ENCODE measurements at regions of chr1 and their contacts with region 1.

Region 1: GRCh38 chr1:154272217-154272998 is at the start of gene HAX1:
- DNase-seq: peak; percentile 96
- H3K4me3 Mint-ChIP-seq: peak within 1 kb of the TSS; percentile 96
- H3K27ac Mint-ChIP-seq: peak within 1 kb of the TSS; percentile 94
- H3K4me1 Mint-ChIP-seq: peaks cover 28% of the 10 kb centered on the region
- H3K27me3 Mint-ChIP-seq: no peaks in the 10 kb centered on the region
- total RNA-seq, gene HAX1: 112 and 113 TPM in 2 replicates

Region 2: GRCh38 chr1:154145986-154146385 is 126.4 kb before region 1 on chr1:
- intact Hi-C with region 1: no loop called
- DNase-seq: no peak
- H3K4me3 Mint-ChIP-seq: no peak overlapping the region
- H3K27ac Mint-ChIP-seq: no peak overlapping the region
- H3K4me1 Mint-ChIP-seq: peaks cover 10% of the 10 kb centered on the region
- H3K27me3 Mint-ChIP-seq: no peaks in the 10 kb centered on the region

Region 3: DNA sequence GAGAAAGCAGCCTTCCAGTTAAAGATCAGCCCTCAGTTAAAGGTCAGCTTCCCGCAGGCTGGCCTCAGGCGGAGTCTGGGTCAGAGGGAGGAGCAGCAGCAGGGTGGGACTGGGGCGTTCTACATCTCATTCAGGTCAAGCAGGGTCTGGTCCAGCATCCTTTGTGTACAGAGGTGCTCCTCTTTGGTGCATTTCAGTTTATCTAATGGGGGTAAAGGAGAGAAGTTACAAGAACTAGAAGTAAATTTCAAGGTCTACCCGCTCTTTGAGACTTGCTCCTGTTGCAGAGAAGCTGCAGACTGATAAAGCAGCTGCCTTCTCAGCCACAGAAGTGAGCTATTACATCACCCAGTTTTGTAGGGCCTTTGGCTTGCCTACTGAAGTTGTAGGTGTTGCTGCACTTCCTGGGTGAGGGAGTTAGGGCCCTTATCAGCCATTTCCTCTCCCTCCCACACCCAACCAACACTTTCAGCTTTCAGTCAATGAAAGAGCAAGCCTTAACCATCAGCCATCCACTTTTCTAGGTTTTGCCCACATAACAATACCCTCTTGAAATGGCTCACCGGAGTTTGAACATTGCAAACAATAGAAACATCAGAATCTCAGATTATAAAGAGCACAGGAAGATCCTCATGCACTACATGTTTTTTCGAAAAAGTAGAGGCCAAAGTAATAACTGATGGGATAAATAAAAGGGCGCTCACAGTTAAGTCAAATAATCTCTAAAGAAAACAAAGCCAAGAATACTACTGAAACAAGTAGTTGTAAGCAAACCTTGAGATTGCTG is 114.7 kb before region 1 on chr1:
- intact Hi-C with region 1: loop called (anchors 1 kb)
- DNase-seq: peak; percentile 79
- H3K4me3 Mint-ChIP-seq: peak overlapping the region; percentile 65
- H3K27ac Mint-ChIP-seq: peak overlapping the region; percentile 86
- H3K4me1 Mint-ChIP-seq: peaks cover 52% of the 10 kb centered on the region
- H3K27me3 Mint-ChIP-seq: no peaks in the 10 kb centered on the region

Region 4: DNA sequence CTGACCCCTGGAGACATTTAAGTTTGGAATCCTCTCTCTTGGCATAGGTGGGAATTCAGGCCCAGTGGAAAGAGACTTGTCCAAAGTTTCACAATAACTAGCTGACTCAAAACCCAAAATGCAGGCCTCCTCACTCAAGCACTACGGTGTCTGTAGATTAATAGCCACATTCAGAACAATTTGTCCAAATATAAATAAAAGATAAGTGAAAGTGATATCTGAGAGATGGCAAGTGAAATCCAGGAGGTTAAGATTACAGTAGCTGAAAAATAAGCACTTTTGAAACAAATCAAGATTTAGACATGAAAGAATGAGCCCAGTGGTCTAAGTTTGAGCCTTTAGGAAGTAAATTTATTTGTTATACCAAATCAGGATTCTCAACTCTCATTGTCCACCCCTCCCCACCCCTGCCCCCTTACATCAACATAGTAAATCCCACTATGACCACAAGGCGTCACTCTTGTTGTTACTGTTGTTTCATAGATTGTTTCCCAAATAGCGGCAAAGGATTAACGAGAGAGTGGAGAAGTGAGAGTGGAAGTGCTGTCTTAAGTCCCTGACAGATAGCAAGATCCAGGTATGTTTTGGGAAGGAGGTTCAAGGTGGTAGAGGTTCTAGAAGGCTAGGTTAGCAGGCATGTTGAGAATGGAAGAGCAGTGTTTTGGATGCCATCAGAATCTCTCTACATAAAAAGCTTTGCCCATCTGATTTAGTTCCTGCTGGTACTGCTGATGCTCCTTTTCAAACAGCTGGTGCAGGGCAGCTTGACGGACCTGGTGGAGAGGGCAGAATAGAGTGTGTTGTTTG is 73.4 kb before region 1 on chr1:
- intact Hi-C with region 1: loop called (anchors 1 kb)
- DNase-seq: no peak
- H3K4me3 Mint-ChIP-seq: no peak overlapping the region
- H3K27ac Mint-ChIP-seq: no peak overlapping the region
- H3K4me1 Mint-ChIP-seq: no peaks in the 10 kb centered on the region
- H3K27me3 Mint-ChIP-seq: peaks cover 5% of the 10 kb centered on the region

Region 5: GRCh38 chr1:154324669-154325582 is 52.5 kb after region 1 on chr1 and contains the start of gene ATP8B2:
- intact Hi-C with region 1: loop called (anchors 2 kb)
- DNase-seq: peak; percentile 77
- H3K4me3 Mint-ChIP-seq: peak within 1 kb of the TSS; percentile 95
- H3K27ac Mint-ChIP-seq: peak within 1 kb of the TSS; percentile 89
- H3K4me1 Mint-ChIP-seq: peaks cover 33% of the 10 kb centered on the region
- H3K27me3 Mint-ChIP-seq: peaks cover 18% of the 10 kb centered on the region
- total RNA-seq, gene ATP8B2: 44.0 and 47.0 TPM in 2 replicates

Region 6: DNA sequence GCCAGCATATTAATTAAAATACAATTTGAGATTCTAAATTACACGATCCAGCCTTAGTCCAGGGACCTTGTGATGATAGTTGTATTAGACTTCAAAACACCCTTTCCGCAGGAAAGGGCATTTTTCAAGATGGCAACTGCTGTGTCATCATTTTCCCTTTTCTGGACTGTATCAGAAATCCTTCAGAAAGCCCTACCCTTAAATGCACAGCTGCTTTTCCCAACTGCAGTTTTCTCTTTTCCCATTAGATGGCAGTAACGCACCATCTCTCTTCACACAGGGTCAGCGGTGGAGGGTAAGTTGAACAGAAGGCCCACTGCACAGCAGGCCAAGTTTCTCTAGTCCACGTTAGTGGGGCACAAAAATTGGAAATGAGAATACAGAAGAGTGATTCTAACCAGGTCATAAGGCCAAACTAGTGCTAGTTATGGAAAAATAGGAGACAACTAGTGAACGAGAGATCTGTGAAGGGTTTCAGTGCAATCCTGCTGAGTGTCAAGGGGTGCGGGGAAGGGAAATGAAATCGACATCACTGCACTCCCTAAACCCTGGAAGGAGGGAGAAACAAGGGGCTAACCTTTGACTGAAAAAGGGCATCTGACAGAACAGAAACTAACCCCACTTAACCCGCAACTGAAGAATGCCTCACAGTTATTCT is 207.5 kb after region 1 on chr1:
- intact Hi-C with region 1: loop called (anchors 5 kb)
- DNase-seq: peak; percentile 56
- H3K4me3 Mint-ChIP-seq: no peak overlapping the region
- H3K27ac Mint-ChIP-seq: no peak overlapping the region
- H3K4me1 Mint-ChIP-seq: peaks cover 18% of the 10 kb centered on the region
- H3K27me3 Mint-ChIP-seq: peaks cover 5% of the 10 kb centered on the region

Measured in activated T-helper 2 cell treated with anti-CD3 and anti-CD28 coated beads, Interferon-gamma antibody, Interleukin-2, Interleukin-4, amounts not matched to agents 10 μg/mL and 5 μg/mL and 100 μg/mL, durations not matched to agents 14 hours and 24 hours and 36 hours (primary cell).